ENCODE measurements at regions of chr12 and their contacts with region 1.

Region 1: GRCh38 chr12:95820102-95820703 is 29.6 kb upstream of the NTN4 start:
- DNase-seq: peak; percentile 72 to 75
- ATAC-seq: peak in 1 of 2 experiments; percentile 82; a peak in 3 of 6 replicates
- H3K4me3 ChIP-seq: no peak overlapping the region
- H3K27ac ChIP-seq: no peak overlapping the region
- H3K4me1 ChIP-seq: peaks cover 4% of the 10 kb centered on the region; the same call in 2 of the 3 replicates
- CTCF ChIP-seq: peak; percentile 70
- EP300 ChIP-seq: no peak
- POLR2A ChIP-seq: no peak
- RAD21 ChIP-seq: peak; percentile 52 to 66

Region 2: GRCh38 chr12:95574799-95575452 is 245.3 kb before region 1 on chr12:
- CTCF ChIA-PET with region 1: interaction called, 132 read pairs
- POLR2A ChIA-PET with region 1: no interaction called
- DNase-seq: peak; percentile 50 to 61
- ATAC-seq: peak; percentile 68 to 87; a peak in 5 of 6 replicates
- H3K4me3 ChIP-seq: no peak overlapping the region
- H3K27ac ChIP-seq: no peak overlapping the region
- H3K4me1 ChIP-seq: no peaks in the 10 kb centered on the region
- CTCF ChIP-seq: peak; percentile 76
- EP300 ChIP-seq: no peak
- POLR2A ChIP-seq: no peak
- RAD21 ChIP-seq: peak; percentile 52 to 66

Region 3: DNA sequence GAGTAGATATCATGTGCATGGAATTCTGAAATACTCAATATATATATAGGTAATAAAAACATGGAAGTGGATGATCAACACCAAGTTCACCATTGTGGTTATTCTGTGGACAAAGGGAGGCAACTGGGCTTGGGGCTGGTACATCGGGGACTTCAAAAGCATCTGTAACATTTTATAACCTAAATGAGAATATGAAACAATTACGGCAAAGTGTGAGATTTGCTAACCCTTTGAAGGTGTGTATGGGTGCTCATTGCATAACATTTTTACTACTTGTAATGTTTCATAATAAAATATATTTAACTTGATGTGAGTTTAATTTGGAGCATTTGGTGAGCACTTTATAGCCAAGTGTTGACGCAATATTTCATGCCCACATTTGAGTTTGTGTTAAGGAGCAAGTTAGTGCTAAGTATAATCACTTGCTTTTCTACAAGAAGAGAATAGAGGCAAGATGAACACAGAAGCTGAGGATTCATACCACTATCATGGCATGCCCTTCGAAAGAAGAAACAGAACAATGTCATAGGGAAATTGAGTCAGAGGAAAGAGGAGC is 138.9 kb before region 1 on chr12:
- CTCF ChIA-PET with region 1: no interaction called
- POLR2A ChIA-PET with region 1: no interaction called
- DNase-seq: no peak
- ATAC-seq: no peak
- H3K4me3 ChIP-seq: no peak overlapping the region
- H3K27ac ChIP-seq: no peak overlapping the region
- H3K4me1 ChIP-seq: no peaks in the 10 kb centered on the region
- CTCF ChIP-seq: no peak
- EP300 ChIP-seq: no peak
- POLR2A ChIP-seq: no peak
- RAD21 ChIP-seq: no peak

Region 4: DNA sequence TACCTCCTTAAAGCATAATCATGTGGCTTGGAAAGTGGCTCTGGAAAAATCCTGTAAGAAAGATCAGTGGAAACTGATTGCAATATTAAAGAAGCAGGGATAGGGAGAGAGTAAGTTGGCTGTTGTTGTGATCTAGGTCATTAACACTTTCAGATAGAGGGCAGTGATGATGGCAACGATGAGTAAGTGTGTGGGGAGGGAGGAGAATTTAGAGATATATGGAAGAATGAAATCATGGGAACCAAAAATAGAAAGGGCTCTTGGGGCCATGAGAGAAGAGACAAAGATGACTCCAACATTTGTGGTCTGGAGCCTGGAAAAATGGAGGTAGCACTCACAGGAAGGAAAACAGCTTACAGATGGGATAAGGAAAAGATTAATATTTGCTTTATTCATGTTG is 61.9 kb after region 1 on chr12:
- CTCF ChIA-PET with region 1: no interaction called
- POLR2A ChIA-PET with region 1: no interaction called
- DNase-seq: no peak
- ATAC-seq: no peak
- H3K4me3 ChIP-seq: no peak overlapping the region
- H3K27ac ChIP-seq: no peak overlapping the region
- H3K4me1 ChIP-seq: no peaks in the 10 kb centered on the region
- CTCF ChIP-seq: no peak
- EP300 ChIP-seq: no peak
- POLR2A ChIP-seq: no peak
- RAD21 ChIP-seq: no peak

Measured in A549 (cell line).